ENCODE measurements at regions of chr14 and their contacts with region 1.

Region 1: GRCh38 chr14:22715186-22715812 is 51.2 kb upstream of the OXA1L start:
- DNase-seq: no peak
- ATAC-seq: no peak; the same call in 2 of the 3 replicates
- H3K4me3 ChIP-seq: no peak overlapping the region
- H3K27ac ChIP-seq: no peak overlapping the region
- H3K4me1 ChIP-seq: peaks cover 13% of the 10 kb centered on the region
- H3K27me3 ChIP-seq: peaks cover 0 to 13% of the 10 kb centered on the region in 2 experiments; a peak in 1 of 5 replicates
- CTCF ChIP-seq: no peak
- EP300 ChIP-seq: no peak
- POLR2A ChIP-seq: no peak
- RAD21 ChIP-seq: no peak

Region 2: GRCh38 chr14:22653012-22653621 is 62.2 kb before region 1 on chr14:
- CTCF ChIA-PET with region 1: interaction called, 7 read pairs
- POLR2A ChIA-PET with region 1: no interaction called
- in situ Hi-C with region 1: no loop called
- intact Hi-C with region 1: loop called (anchors 1 kb)
- DNase-seq: peak; percentile 86
- ATAC-seq: peak; percentile 98
- H3K4me3 ChIP-seq: no peak overlapping the region
- H3K27ac ChIP-seq: no peak overlapping the region
- H3K4me1 ChIP-seq: 0 out of 2 replicates have a peak, but pooled peaks cover 5% of the 10 kb centered on the region
- H3K27me3 ChIP-seq: peaks cover 3 to 36% of the 10 kb centered on the region in 2 experiments; a peak in 4 of 5 replicates
- CTCF ChIP-seq: peak; percentile 99
- EP300 ChIP-seq: no peak; a peak in 1 of 4 replicates
- POLR2A ChIP-seq: no peak
- RAD21 ChIP-seq: peak; percentile 94

Region 3: GRCh38 chr14:22726012-22726411 is 10.7 kb after region 1 on chr14:
- CTCF ChIA-PET with region 1: no interaction called
- POLR2A ChIA-PET with region 1: no interaction called
- in situ Hi-C with region 1: no loop called
- intact Hi-C with region 1: loop called (anchors 1 kb)
- DNase-seq: no peak
- ATAC-seq: peak; percentile 42
- H3K4me3 ChIP-seq: no peak overlapping the region
- H3K27ac ChIP-seq: no peak overlapping the region
- H3K4me1 ChIP-seq: no peaks in the 10 kb centered on the region
- H3K27me3 ChIP-seq: peaks cover 0 to 43% of the 10 kb centered on the region in 2 experiments
- CTCF ChIP-seq: no peak
- EP300 ChIP-seq: no peak
- POLR2A ChIP-seq: no peak
- RAD21 ChIP-seq: no peak

Region 4: DNA sequence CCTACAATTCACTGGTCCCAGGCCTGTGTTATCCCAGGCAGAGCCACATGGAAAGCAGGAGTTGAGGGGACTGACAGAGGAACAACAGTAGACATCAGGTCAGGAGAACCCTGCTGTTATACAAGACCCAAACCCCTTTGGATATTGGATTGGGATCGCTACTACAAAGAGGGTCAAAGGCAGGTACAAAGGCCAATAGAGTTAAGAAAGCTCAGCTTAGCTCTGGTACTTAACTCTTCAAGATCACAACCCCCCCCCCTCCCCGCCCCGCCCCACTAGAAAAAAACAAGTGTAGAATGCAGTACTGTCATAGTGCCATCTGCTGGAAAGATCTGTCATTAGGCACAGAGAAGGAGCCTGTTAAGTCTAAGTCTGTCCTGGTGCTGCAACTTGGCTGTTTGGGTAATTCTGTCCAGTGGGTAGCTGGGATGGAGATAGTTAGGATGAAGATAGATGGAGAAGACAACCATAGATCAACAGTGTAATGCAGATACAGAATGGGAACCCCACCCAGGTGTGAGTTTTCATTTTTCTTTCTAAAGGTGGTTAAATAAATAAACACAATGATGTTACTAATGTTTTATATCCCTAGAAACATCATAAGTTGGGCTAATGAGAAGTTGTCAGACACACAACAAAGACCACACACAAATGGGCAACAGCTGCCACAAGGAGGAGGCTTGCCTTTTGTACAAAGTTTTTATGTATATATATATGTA is 184.9 kb after region 1 on chr14:
- CTCF ChIA-PET with region 1: no interaction called
- POLR2A ChIA-PET with region 1: no interaction called
- in situ Hi-C with region 1: no loop called
- intact Hi-C with region 1: no loop called
- DNase-seq: peak; percentile 83
- ATAC-seq: peak; percentile 39
- H3K4me3 ChIP-seq: no peak overlapping the region
- H3K27ac ChIP-seq: no peak overlapping the region
- H3K4me1 ChIP-seq: peaks cover 45% of the 10 kb centered on the region
- H3K27me3 ChIP-seq: peaks cover 4 to 6% of the 10 kb centered on the region in 2 experiments; a peak in 2 of 5 replicates
- CTCF ChIP-seq: peak; percentile 87
- EP300 ChIP-seq: no peak
- POLR2A ChIP-seq: no peak
- RAD21 ChIP-seq: peak; percentile 56; the same call in 1 of the 2 replicates

Measured in HepG2 (cell line).